ENCODE measurements at regions of chr3 and their contacts with region 1.

Region 1: DNA sequence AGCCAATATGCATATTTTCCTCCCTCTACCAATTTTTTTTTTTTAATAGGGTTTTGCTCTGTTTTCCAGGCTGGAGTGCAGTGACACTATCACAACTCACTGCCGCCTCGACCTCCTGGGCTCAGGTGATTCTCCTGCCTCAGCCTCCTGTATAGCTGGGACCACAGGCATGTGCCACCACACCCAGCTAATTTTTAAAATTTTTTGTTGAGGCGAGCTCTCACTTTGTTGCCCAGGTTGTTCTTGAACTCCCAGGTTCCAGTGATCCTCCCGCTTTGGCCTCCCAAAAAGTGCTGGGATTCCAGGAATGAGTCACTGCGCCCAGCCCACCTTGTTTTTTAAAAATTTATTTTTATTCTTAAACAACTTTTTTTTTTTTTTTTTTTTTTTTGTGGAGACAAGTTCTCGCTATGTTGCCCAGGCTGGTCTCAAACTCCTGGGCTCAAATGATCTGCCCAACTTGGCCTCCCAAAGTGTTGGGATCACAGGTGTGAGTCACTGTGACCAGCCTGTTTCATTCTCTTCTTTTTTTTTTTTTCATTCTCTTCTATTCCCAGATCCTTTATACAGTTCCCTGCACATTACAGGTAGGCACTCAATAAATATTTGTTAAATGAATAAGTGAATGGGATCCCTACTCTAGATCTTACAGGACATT is 40.5 kb upstream of the PIK3CB start:
- DNase-seq: no peak
- H3K4me3 ChIP-seq: no peak overlapping the region
- H3K27ac ChIP-seq: no peak overlapping the region
- H3K4me1 ChIP-seq: no peaks in the 10 kb centered on the region
- H3K27me3 ChIP-seq: no peaks in the 10 kb centered on the region
- CTCF ChIP-seq: no peak

Region 2: DNA sequence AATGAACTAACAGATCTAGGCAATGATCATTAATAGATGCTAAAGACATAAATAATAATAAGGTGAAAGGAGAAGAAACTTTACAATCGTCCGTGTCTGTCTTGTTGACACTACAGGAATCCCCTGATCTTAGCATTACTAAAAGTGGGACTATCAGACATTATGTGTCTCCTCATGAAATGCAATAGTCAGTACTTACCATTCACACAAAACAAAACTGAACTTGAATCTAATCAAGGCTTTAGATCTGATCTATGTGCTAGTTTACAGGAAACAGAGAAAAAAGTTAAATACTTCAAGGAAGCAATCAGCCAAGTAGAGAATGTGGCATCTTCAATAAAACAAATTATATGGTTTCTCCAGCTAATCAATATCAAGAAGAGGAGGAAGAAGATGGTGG is 114.2 kb before region 1 on chr3:
- CTCF ChIA-PET with region 1: no interaction called
- POLR2A ChIA-PET with region 1: interaction called, 40 read pairs
- intact Hi-C with region 1: no loop called
- DNase-seq: no peak
- H3K4me3 ChIP-seq: no peak overlapping the region
- H3K27ac ChIP-seq: no peak overlapping the region
- H3K4me1 ChIP-seq: no peaks in the 10 kb centered on the region
- H3K27me3 ChIP-seq: no peaks in the 10 kb centered on the region
- CTCF ChIP-seq: no peak

Region 3: GRCh38 chr3:138774529-138775253 is 100.5 kb before region 1 on chr3:
- CTCF ChIA-PET with region 1: no interaction called
- POLR2A ChIA-PET with region 1: no interaction called
- intact Hi-C with region 1: no loop called
- DNase-seq: peak; percentile 45 to 93
- H3K4me3 ChIP-seq: no peak overlapping the region
- H3K27ac ChIP-seq: peak overlapping the region; percentile 54
- H3K4me1 ChIP-seq: peaks cover 19% of the 10 kb centered on the region
- H3K27me3 ChIP-seq: no peaks in the 10 kb centered on the region
- CTCF ChIP-seq: no peak

Region 4: GRCh38 chr3:138842483-138843188 is 32.6 kb before region 1 on chr3:
- CTCF ChIA-PET with region 1: interaction called, 13 read pairs
- POLR2A ChIA-PET with region 1: no interaction called
- intact Hi-C with region 1: no loop called
- DNase-seq: no peak
- H3K4me3 ChIP-seq: no peak overlapping the region
- H3K27ac ChIP-seq: no peak overlapping the region
- H3K4me1 ChIP-seq: 0 out of 2 replicates have a peak, but pooled peaks cover 8% of the 10 kb centered on the region
- H3K27me3 ChIP-seq: no peaks in the 10 kb centered on the region
- CTCF ChIP-seq: no peak